Activated CD8-positive, alpha-beta T cell treated with anti-CD3 and anti-CD28 coated beads, Interleukin-2, amount 10 ng/mL, durations not matched to agents 7 days and 5 days (primary cell): ENCODE measurements at regions of chr3 and their contacts with region 1.

Region 1: DNA sequence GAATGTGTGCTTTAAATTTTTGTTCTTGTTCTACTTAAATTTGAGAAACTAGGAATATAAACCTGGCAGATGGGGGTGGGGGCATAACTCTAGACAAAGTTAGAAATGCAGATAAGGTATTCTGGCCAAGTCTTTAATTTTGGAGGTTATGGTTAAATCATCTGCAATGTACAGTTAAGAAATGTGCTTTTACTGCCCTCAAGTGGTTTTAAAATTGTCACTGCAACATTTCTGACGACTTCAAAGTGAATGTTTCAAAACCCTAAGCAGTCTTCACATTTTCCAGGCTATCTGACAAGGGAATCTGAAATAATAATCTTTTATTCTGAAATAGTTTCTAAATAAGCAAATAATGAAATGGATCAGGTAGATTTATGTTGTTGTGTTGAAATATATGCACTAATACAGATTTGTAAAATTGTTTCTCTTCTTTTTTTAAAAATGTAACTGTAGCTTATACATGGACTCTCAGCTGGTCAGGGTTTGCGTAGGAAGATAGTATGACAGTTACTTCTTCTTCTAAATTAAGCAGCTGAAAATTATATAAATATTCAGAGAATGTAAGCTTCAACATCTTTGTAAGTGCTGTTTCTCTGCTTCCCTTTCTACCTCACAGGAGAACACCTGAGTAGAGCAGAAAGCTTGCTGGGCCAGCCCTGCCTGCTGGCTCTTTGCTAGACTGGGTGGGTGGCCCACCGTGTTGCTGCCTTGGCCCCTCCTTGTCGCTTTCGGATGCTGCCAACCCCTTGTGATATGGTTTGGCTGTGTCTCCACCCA is 45.0 kb downstream of the SUCNR1 start:
- DNase-seq: no peak
- ATAC-seq: peak; percentile 51
- H3K4me3 Mint-ChIP-seq: no peak overlapping the region
- H3K27ac Mint-ChIP-seq: no peak overlapping the region
- H3K4me1 Mint-ChIP-seq: no peaks in the 10 kb centered on the region
- H3K27me3 Mint-ChIP-seq: peaks cover 5% of the 10 kb centered on the region

Region 2: DNA sequence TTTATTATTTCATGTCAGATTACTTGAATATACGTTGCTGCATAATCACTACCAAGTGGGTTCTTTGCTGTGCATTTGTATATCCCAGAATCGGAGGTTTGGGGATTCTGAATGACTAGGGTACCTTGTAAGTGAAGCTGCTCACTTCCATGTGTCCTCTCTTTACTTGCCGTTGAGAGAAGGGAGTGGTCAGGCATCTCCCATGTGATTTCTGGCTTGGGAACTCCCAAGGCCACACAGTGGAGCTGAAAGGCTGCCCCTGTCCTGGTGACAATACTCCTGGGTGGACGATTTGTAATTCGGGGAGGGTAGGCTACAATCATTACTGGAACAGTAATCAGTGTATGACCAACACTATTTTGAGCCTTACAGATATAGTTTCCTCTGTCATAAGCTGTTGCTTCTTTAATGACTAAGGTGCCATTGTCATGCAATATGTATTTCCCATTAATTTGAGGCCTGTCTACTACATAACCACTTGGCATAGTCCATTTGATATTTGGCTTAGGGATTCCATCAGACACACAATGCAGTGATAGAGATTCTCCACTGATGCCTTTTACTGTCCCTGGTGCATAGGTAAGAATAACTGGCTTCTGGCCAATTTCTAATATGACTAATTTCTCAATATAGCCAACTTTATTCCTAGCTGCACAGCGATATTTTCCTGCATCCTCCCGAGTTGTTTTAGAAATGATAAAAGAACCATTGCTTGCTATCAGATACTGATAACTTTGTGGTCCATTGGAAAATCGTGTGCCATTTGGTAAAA is 481.6 kb before region 1 on chr3:
- CTCF ChIA-PET with region 1: interaction called, 10 read pairs
- POLR2A ChIA-PET with region 1: no interaction called
- DNase-seq: no peak
- ATAC-seq: no peak
- H3K4me3 Mint-ChIP-seq: no peak overlapping the region
- H3K27ac Mint-ChIP-seq: no peak overlapping the region
- H3K4me1 Mint-ChIP-seq: no peaks in the 10 kb centered on the region
- H3K27me3 Mint-ChIP-seq: no peaks in the 10 kb centered on the region

Region 3: DNA sequence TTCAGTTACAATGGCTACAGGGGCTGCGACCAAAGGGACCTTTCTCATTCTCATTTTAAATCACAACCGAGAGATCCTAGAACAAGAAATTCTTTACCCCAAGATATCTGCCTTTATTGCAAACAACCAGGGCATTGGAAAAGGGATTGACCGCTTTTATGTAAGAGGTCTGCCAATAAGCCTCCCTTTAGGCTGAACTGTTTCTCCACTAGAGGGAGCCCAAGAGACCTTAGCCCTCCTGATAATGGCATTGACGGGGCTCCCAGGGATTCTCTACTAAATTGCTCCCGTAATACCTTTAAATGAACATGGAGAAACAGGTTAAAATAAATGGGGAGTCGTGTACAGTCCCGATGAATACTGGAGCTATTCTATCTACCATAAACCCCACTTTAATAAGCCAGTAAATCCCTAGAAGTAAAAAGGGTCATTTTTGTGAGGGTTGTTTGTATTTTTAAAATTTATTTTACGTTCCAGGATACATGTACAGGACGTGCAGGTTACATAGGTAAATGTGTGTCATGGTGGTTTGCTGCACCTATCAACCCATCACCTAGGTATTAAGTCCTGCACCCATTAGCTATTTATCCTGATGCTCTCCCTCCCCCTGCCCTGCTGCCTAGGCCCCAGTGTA is 450.0 kb before region 1 on chr3:
- CTCF ChIA-PET with region 1: interaction called, 14 read pairs
- POLR2A ChIA-PET with region 1: interaction called, 3 read pairs
- DNase-seq: peak; percentile 53
- ATAC-seq: peak; percentile 83
- H3K4me3 Mint-ChIP-seq: no peak overlapping the region
- H3K27ac Mint-ChIP-seq: no peak overlapping the region
- H3K4me1 Mint-ChIP-seq: no peaks in the 10 kb centered on the region
- H3K27me3 Mint-ChIP-seq: peaks cover 9% of the 10 kb centered on the region

Region 4: DNA sequence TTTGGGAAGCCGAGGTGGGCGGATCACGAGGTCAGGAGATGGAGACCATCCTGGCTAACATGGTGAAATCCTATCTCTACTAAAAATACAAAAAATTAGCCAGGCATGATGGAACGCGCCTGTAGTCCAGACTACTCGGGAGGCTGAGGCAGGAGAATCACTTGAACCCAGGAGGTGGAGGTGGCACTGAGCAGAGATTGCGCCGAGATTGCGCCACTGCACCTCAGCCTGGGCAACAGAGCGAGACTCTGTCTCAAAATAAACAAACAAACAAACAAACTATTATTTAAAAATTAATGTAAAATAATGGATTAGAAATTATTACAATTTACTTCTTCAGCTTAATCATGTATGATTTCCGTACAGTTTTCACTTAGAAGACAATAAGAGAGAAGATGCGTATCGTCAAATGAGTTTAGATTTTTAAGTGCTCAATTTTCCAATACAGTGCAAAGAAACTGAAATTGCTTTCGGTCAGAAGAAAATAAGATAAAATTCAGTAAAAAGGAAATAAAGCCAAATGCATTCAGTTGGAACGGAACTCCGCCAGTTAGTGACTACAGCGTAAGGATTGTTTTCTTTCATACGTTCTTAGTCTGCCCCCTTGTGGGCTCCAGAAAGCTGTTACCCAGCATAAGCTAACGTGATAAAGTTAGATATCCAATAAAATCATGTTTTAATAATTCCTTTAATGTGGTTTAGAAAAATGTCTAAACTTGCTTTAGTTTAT is 79.7 kb before region 1 on chr3:
- CTCF ChIA-PET with region 1: interaction called, 17 read pairs
- POLR2A ChIA-PET with region 1: no interaction called
- DNase-seq: peak; percentile 61
- ATAC-seq: peak; percentile 88
- H3K4me3 Mint-ChIP-seq: no peak overlapping the region
- H3K27ac Mint-ChIP-seq: no peak overlapping the region
- H3K4me1 Mint-ChIP-seq: no peaks in the 10 kb centered on the region
- H3K27me3 Mint-ChIP-seq: peaks cover 30% of the 10 kb centered on the region

Region 5: GRCh38 chr3:151890721-151891141 is 27.7 kb before region 1 on chr3:
- CTCF ChIA-PET with region 1: no interaction called
- POLR2A ChIA-PET with region 1: no interaction called
- DNase-seq: no peak
- ATAC-seq: peak; percentile 33
- H3K4me3 Mint-ChIP-seq: no peak overlapping the region
- H3K27ac Mint-ChIP-seq: peak overlapping the region; percentile 75
- H3K4me1 Mint-ChIP-seq: peaks cover 28% of the 10 kb centered on the region
- H3K27me3 Mint-ChIP-seq: no peaks in the 10 kb centered on the region

Region 6: GRCh38 chr3:152235709-152236298 is 317.4 kb after region 1 on chr3:
- CTCF ChIA-PET with region 1: no interaction called
- POLR2A ChIA-PET with region 1: no interaction called
- DNase-seq: no peak
- ATAC-seq: no peak
- H3K4me3 Mint-ChIP-seq: no peak overlapping the region
- H3K27ac Mint-ChIP-seq: peak overlapping the region; percentile 24
- H3K4me1 Mint-ChIP-seq: peaks cover 74% of the 10 kb centered on the region
- H3K27me3 Mint-ChIP-seq: no peaks in the 10 kb centered on the region